Naive thymus-derived CD4-positive, alpha-beta T cell (primary cell): ENCODE measurements at regions of chr1 and their contacts with region 1.

Region 1: GRCh38 chr1:31335007-31335406 is 37.9 kb downstream of the FABP3 start:
- DNase-seq: peak in 5 of 9 donors; percentile 4 to 22 (median 7)
- ATAC-seq: no peak
- H3K4me3 ChIP-seq: no peak overlapping the region
- H3K4me3 Mint-ChIP-seq: no peak overlapping the region
- H3K27ac ChIP-seq: no peak overlapping the region
- H3K27ac Mint-ChIP-seq: no peak overlapping the region
- H3K4me1 ChIP-seq: no peaks in the 10 kb centered on the region
- H3K4me1 Mint-ChIP-seq: peaks cover 0 to 7% (median 4%) of the 10 kb centered on the region in 7 donors
- H3K27me3 ChIP-seq: no peaks in the 10 kb centered on the region
- H3K27me3 Mint-ChIP-seq: no peaks in the 10 kb centered on the region

Region 2: GRCh38 chr1:31166462-31166861 is 168.5 kb before region 1 on chr1:
- CTCF ChIA-PET with region 1: no interaction called
- POLR2A ChIA-PET with region 1: no interaction called
- intact Hi-C with region 1: loop called in 1 of 2 experiments (anchors 1 kb)
- DNase-seq: no peak
- ATAC-seq: no peak
- H3K4me3 ChIP-seq: no peak overlapping the region
- H3K4me3 Mint-ChIP-seq: no peak overlapping the region
- H3K27ac ChIP-seq: no peak overlapping the region
- H3K27ac Mint-ChIP-seq: no peak overlapping the region
- H3K4me1 ChIP-seq: no peaks in the 10 kb centered on the region
- H3K4me1 Mint-ChIP-seq: peaks cover 3 to 17% (median 5%) of the 10 kb centered on the region in 7 donors
- H3K27me3 ChIP-seq: no peaks in the 10 kb centered on the region
- H3K27me3 Mint-ChIP-seq: peaks cover 4 to 10% (median 6%) of the 10 kb centered on the region in 5 donors

Region 3: DNA sequence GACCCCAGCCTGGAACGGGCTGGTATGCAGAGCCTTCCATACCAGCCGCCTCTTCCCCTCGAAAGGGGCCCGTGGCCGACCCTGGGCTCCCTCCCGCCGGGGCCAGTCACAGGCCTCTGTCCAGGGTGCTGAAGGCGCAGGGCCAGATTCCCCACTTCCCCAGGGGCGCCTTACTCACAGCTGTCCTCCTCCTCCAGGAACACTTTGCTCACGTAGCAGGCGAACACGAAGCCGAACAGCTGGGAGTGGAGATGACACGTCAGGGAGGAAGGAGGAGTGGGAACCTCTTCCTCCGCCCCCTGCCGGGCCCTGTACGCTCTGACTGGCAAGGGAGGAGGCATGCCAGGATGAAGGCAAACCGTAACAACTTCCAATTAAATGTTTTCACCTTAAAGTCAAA is 152.7 kb before region 1 on chr1:
- CTCF ChIA-PET with region 1: no interaction called
- POLR2A ChIA-PET with region 1: no interaction called
- intact Hi-C with region 1: loop called in 1 of 2 experiments (anchors 2 kb)
- DNase-seq: peak in 8 of 9 donors; percentile 21 to 72 (median 32)
- ATAC-seq: peak; percentile 72
- H3K4me3 ChIP-seq: no peak overlapping the region
- H3K4me3 Mint-ChIP-seq: peak overlapping the region in 4 of 10 donors; percentile 17 to 40 (median 28)
- H3K27ac ChIP-seq: no peak overlapping the region
- H3K27ac Mint-ChIP-seq: no peak overlapping the region
- H3K4me1 ChIP-seq: no peaks in the 10 kb centered on the region
- H3K4me1 Mint-ChIP-seq: peaks cover 0 to 10% (median 8%) of the 10 kb centered on the region in 7 donors
- H3K27me3 ChIP-seq: peaks cover 3 to 8% of the 10 kb centered on the region in 2 donors
- H3K27me3 Mint-ChIP-seq: peaks cover 33 to 55% (median 50%) of the 10 kb centered on the region in 5 donors